ENCODE measurements at regions of chr14 and their contacts with region 1.

Region 1: DNA sequence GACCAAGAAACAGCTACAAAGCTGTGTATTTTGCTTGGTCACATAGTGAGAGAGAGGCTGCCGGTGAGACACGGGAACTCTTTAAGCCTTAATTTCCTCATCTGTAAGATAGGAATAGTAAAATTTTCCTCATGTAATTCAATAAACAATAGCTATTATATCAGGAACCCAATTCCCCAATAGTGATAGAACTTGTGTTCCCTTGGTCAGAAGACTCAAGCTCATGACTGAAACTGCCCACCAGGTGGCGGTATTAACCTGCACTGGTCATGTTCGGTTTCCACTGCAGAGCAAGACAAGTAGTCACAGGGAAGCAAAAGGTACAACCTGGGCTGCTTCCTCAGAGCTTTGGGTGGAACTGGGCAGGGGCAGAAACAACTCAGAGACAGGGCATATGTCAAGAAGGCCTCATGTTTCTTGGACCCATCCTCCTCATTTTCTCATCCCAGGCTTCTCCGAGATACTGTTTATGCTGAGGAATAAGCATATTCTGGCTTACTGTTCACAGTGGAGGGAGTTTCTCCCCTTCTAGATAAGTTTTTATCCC is 4.2 kb upstream of the AJUBA start:
- DNase-seq: peak; percentile 89
- H3K4me3 ChIP-seq: no peak overlapping the region
- H3K27ac ChIP-seq: no peak overlapping the region
- H3K4me1 ChIP-seq: no peaks in the 10 kb centered on the region
- CTCF ChIP-seq: peak; percentile 99

Region 2: DNA sequence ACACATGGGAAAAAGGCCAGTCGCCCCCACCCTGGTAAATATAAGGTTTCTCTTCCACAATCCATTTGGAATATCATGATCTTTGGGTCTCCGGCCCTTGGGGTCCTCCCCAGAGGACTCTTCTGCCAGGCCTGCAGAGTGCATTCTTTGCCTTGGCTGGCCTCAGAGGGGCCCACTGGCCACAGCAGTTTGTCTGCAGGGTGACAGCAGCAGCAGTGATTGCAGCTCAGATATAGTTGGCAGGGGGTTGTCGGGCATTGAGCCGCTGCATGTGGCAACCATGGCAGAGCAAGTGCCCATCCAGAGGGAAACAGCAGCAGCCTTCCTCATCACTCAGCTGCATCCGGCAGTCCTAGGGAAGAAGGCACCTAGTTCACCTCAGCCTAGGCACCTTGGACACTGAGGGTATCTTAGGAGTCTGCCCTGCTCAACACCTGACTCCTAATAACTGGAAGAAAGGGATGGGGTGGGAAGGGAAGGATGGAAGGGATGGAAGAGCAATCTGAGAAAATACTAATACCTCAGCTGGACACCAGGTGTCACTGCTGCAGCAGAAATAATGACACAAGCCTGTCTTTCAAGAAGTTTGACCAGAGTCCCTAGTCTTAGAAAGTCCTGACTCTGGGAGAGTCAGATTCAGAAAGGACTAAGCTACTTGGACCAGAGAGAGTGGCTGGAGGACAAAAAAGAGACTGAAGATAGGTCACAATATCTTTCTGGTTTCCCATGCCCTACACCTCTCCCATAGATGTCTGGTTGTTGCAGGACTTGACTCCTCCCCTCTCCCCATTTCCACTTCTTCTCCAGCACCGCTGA is 13.2 kb before region 1 on chr14:
- CTCF ChIA-PET with region 1: interaction called, 12 read pairs
- POLR2A ChIA-PET with region 1: interaction called, 4 read pairs
- intact Hi-C with region 1: loop called (anchors 2 kb)
- DNase-seq: peak; percentile 65
- H3K4me3 ChIP-seq: no peak overlapping the region
- H3K27ac ChIP-seq: no peak overlapping the region
- H3K4me1 ChIP-seq: peaks cover 17% of the 10 kb centered on the region
- CTCF ChIP-seq: peak; percentile 85

Region 3: GRCh38 chr14:23057757-23058653 is 71.4 kb after region 1 on chr14:
- CTCF ChIA-PET with region 1: interaction called, 8 read pairs
- POLR2A ChIA-PET with region 1: interaction called, 3 read pairs
- intact Hi-C with region 1: loop called (anchors 1 kb)
- DNase-seq: peak; percentile 86
- H3K4me3 ChIP-seq: peak overlapping the region; percentile 62
- H3K27ac ChIP-seq: no peak overlapping the region
- H3K4me1 ChIP-seq: peaks cover 27% of the 10 kb centered on the region
- CTCF ChIP-seq: peak; percentile 95

Region 4: GRCh38 chr14:23186913-23187654 is 200.5 kb after region 1 on chr14:
- CTCF ChIA-PET with region 1: no interaction called
- POLR2A ChIA-PET with region 1: no interaction called
- intact Hi-C with region 1: loop called (anchors 5 kb)
- DNase-seq: peak; percentile 65
- H3K4me3 ChIP-seq: no peak overlapping the region
- H3K27ac ChIP-seq: no peak overlapping the region
- H3K4me1 ChIP-seq: peaks cover 16% of the 10 kb centered on the region
- CTCF ChIP-seq: peak; percentile 92